ENCODE measurements at regions of chr3 and their contacts with region 1.

Region 1: GRCh38 chr3:111717601-111718000 is 122.5 kb upstream of the ZBED2 start:
- DNase-seq: peak; percentile 57 to 59
- H3K4me3 ChIP-seq: no peak overlapping the region
- H3K27ac ChIP-seq: no peak overlapping the region
- H3K4me1 ChIP-seq: no peaks in the 10 kb centered on the region
- H3K27me3 ChIP-seq: no peaks in the 10 kb centered on the region
- CTCF ChIP-seq: peak; percentile 60 to 98 (median 94)
- EP300 ChIP-seq: no peak
- POLR2A ChIP-seq: no peak
- RAD21 ChIP-seq: peak; percentile 99 to 100

Region 2: DNA sequence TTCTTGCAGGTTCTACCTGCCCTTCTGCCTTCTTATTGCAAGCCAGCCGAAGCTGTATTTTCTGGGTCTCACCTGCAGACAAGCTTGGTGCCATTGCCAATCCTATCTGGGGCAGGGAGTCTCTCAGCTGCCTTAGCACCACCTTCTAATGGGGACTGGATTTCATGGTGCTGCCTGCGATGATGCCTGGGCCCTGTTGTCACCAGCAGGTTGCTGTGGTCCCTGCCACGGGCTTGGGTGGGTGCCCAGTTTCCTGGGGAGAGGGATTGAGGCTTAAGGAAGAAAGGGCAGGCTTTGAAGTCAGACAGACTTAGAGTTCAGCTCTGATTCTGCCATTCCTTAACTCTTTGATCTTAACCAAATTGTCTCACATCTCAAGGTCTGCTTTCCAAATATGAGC is 263.1 kb before region 1 on chr3:
- CTCF ChIA-PET with region 1: no interaction called
- POLR2A ChIA-PET with region 1: no interaction called
- DNase-seq: no peak
- H3K4me3 ChIP-seq: no peak overlapping the region
- H3K27ac ChIP-seq: no peak overlapping the region
- H3K4me1 ChIP-seq: no peaks in the 10 kb centered on the region
- H3K27me3 ChIP-seq: no peaks in the 10 kb centered on the region
- CTCF ChIP-seq: no peak
- EP300 ChIP-seq: no peak
- POLR2A ChIP-seq: no peak
- RAD21 ChIP-seq: no peak

Region 3: GRCh38 chr3:111566844-111567243 is 150.8 kb before region 1 on chr3:
- CTCF ChIA-PET with region 1: no interaction called
- POLR2A ChIA-PET with region 1: no interaction called
- DNase-seq: no peak
- H3K4me3 ChIP-seq: no peak overlapping the region
- H3K27ac ChIP-seq: no peak overlapping the region
- H3K4me1 ChIP-seq: no peaks in the 10 kb centered on the region
- H3K27me3 ChIP-seq: peaks cover 0 to 2% (median 0%) of the 10 kb centered on the region in 4 experiments; a peak in 1 of 7 replicates
- CTCF ChIP-seq: no peak
- EP300 ChIP-seq: no peak
- POLR2A ChIP-seq: no peak
- RAD21 ChIP-seq: no peak

Region 4: GRCh38 chr3:111577794-111578685 is 139.6 kb before region 1 on chr3:
- CTCF ChIA-PET with region 1: interaction called, 20 read pairs
- POLR2A ChIA-PET with region 1: no interaction called
- DNase-seq: no peak
- H3K4me3 ChIP-seq: no peak overlapping the region
- H3K27ac ChIP-seq: no peak overlapping the region
- H3K4me1 ChIP-seq: no peaks in the 10 kb centered on the region
- H3K27me3 ChIP-seq: no peaks in the 10 kb centered on the region
- CTCF ChIP-seq: peak in 2 of 3 experiments; percentile 44 to 51; a peak in 2 of 4 replicates
- EP300 ChIP-seq: no peak
- POLR2A ChIP-seq: no peak
- RAD21 ChIP-seq: peak; percentile 69 to 74

Region 5: DNA sequence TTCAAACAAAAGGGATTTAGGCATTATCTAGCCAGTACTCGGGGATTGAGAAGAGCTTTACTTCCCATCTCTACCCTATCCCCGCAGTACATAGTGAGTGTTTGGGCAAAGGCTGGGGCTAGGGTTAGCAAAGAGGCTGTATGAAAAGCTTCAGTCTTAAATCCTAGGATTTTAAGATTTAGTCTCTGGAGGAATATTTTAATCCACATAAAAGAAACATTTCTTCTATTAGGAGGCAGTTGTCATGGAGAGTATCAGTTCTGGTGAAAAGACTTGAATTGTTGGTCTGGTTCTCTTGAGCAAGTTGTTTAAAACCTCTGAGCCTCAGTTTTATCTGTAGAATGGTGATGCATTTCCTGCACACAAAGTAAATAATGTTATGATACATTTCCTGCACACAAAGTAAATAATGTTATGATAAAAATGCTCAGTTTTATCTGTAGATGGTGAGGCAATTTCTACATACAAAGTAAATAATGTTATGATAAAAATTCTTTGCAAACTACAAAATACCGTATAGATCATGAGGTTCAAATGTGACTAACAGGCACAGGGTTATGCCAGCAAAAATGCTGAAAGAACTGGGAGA is 68.5 kb before region 1 on chr3:
- CTCF ChIA-PET with region 1: no interaction called
- POLR2A ChIA-PET with region 1: no interaction called
- DNase-seq: no peak
- H3K4me3 ChIP-seq: no peak overlapping the region
- H3K27ac ChIP-seq: no peak overlapping the region
- H3K4me1 ChIP-seq: peaks cover 0 to 9% (median 3%) of the 10 kb centered on the region in 4 experiments; a peak in 2 of 7 replicates
- H3K27me3 ChIP-seq: no peaks in the 10 kb centered on the region
- CTCF ChIP-seq: no peak
- EP300 ChIP-seq: no peak
- POLR2A ChIP-seq: no peak
- RAD21 ChIP-seq: no peak

Region 6: GRCh38 chr3:111700054-111700453 is 17.5 kb before region 1 on chr3:
- CTCF ChIA-PET with region 1: interaction called, 25 read pairs
- POLR2A ChIA-PET with region 1: no interaction called
- DNase-seq: no peak
- H3K4me3 ChIP-seq: no peak overlapping the region
- H3K27ac ChIP-seq: no peak overlapping the region
- H3K4me1 ChIP-seq: no peaks in the 10 kb centered on the region; a peak in 1 of 7 replicates
- H3K27me3 ChIP-seq: no peaks in the 10 kb centered on the region
- CTCF ChIP-seq: no peak
- EP300 ChIP-seq: no peak
- POLR2A ChIP-seq: no peak
- RAD21 ChIP-seq: no peak

Region 7: DNA sequence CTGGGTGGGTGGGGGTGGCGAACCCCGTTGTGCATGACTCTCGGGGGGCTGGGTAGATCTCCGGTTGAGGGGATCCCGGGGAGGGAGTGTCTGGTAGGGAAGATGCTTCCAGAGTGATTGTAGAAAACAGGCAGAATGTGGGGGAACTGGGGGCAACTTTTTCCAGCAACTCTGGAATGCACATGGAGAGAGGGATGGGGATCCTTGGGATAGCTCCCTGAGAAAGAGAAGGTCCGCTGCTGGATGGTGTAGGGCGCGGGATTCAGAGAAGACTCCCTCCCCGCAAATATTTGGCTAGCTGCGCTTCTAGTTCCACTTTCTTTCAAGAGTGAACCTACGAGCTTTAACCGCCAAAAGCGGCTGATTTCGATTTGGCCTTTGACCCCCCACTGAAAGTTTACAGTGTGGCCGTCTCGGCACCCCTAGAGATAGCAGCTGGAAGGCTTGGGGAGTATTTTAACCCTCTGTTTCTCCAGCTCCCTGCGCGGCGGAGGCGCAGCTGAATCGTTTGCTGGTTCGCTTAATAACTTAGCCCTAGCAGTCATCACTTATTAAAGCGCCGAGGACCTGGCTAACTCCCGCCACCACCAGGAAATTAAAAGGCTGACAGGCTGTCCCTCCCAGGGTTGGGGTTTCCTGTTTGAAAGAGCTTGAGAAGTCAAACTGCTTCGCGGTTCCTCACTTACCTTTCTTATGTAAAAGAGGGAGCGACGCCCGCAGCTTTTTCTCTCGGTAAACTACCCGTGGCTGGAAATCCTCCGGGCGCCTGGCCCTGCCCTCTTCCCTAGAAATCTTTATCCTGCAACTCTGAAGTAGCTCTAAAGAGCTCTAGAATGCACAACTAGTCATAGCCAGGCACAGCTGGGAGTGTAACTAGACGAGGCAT is 142.6 kb after region 1 on chr3:
- CTCF ChIA-PET with region 1: interaction called, 47 read pairs
- POLR2A ChIA-PET with region 1: interaction called, 4 read pairs
- DNase-seq: peak; percentile 72 to 75
- H3K4me3 ChIP-seq: peak overlapping the region; percentile 69 to 87 (median 76)
- H3K27ac ChIP-seq: no peak overlapping the region; the same call in 1 of the 2 replicates
- H3K4me1 ChIP-seq: peaks cover 3 to 16% (median 9%) of the 10 kb centered on the region in 4 experiments; a peak in 5 of 7 replicates
- H3K27me3 ChIP-seq: peaks cover 0 to 22% (median 14%) of the 10 kb centered on the region in 4 experiments; a peak in 5 of 7 replicates
- CTCF ChIP-seq: peak; percentile 14 to 28 (median 24)
- EP300 ChIP-seq: no peak
- POLR2A ChIP-seq: no peak
- RAD21 ChIP-seq: peak; percentile 35 to 49; a peak in 3 of 4 replicates

Region 8: DNA sequence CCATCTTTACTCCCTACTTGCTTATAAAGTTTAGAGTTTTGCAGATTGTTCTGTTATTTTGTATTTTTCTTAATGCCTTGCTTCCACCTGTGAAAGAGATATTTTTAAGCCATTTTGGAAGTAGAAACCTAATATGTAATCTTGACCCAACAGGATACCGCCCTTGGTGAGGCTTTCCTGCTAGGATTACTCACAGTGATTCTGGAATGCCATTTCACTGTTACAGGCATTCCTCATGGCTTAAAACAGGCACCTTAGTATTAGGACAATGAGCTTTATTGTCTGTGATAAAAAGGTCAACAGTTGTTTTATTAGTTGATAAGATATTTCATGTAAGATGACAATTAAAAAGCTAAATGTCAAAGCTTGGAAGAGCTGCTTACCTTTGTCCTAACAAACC is 199.7 kb after region 1 on chr3:
- CTCF ChIA-PET with region 1: interaction called, 19 read pairs
- POLR2A ChIA-PET with region 1: no interaction called
- DNase-seq: no peak
- H3K4me3 ChIP-seq: peak overlapping the region in 1 of 4 experiments; percentile 15; a peak in 1 of 8 replicates
- H3K27ac ChIP-seq: no peak overlapping the region
- H3K4me1 ChIP-seq: peaks cover 3 to 11% (median 4%) of the 10 kb centered on the region in 4 experiments; a peak in 5 of 7 replicates
- H3K27me3 ChIP-seq: peaks cover 14 to 35% (median 29%) of the 10 kb centered on the region in 4 experiments
- CTCF ChIP-seq: no peak
- EP300 ChIP-seq: no peak
- POLR2A ChIP-seq: no peak
- RAD21 ChIP-seq: no peak

Region 9: GRCh38 chr3:111989061-111989678 is 271.6 kb after region 1 on chr3:
- CTCF ChIA-PET with region 1: interaction called, 16 read pairs
- POLR2A ChIA-PET with region 1: no interaction called
- DNase-seq: no peak
- H3K4me3 ChIP-seq: no peak overlapping the region
- H3K27ac ChIP-seq: no peak overlapping the region
- H3K4me1 ChIP-seq: no peaks in the 10 kb centered on the region
- H3K27me3 ChIP-seq: no peaks in the 10 kb centered on the region
- CTCF ChIP-seq: peak in 2 of 3 experiments; percentile 64 to 75; a peak in 3 of 4 replicates
- EP300 ChIP-seq: no peak
- POLR2A ChIP-seq: no peak
- RAD21 ChIP-seq: peak; percentile 61 to 64